Activated naive CD4-positive, alpha-beta T cell treated with anti-CD3 and anti-CD28 coated beads, Interleukin-2, amount 10 ng/mL, durations not matched to agents 7 days and 5 days (primary cell): ENCODE measurements at regions of chr12 and their contacts with region 1.

Region 1: GRCh38 chr12:47819896-47820630 is at the start of gene HDAC7:
- DNase-seq: peak; percentile 88
- H3K4me3 Mint-ChIP-seq: peak within 1 kb of the TSS; percentile 94
- H3K27ac Mint-ChIP-seq: peak within 1 kb of the TSS; percentile 95
- H3K4me1 Mint-ChIP-seq: peaks cover 73% of the 10 kb centered on the region
- H3K27me3 Mint-ChIP-seq: no peaks in the 10 kb centered on the region

Region 2: GRCh38 chr12:47779301-47779942 is 40.6 kb before region 1 on chr12:
- CTCF ChIA-PET with region 1: interaction called, 13 read pairs
- DNase-seq: peak; percentile 95
- H3K4me3 Mint-ChIP-seq: no peak overlapping the region
- H3K27ac Mint-ChIP-seq: peak overlapping the region; percentile 77
- H3K4me1 Mint-ChIP-seq: peaks cover 53% of the 10 kb centered on the region
- H3K27me3 Mint-ChIP-seq: no peaks in the 10 kb centered on the region

Region 3: DNA sequence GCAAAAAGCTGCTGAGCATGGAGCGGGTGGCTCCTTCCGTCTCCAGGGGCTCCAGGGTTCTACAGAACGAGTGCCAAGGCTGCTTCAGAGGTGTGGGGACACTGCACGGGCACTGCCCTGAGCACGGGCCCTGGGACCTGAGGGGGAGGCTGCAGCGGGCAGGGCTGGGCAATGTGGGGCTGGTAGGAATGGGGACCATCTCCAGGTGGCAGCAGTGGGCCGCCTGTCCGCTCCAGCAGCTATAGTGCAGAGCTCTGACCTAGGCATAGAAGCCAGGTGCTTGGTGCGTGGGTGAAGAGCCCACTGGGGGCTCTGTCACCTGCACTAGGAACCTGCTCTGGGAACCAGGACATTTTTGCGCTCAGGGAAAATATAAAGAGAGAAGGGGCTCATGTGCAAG is 22.6 kb before region 1 on chr12:
- CTCF ChIA-PET with region 1: interaction called, 47 read pairs
- DNase-seq: peak; percentile 50
- H3K4me3 Mint-ChIP-seq: no peak overlapping the region
- H3K27ac Mint-ChIP-seq: peak overlapping the region; percentile 90
- H3K4me1 Mint-ChIP-seq: peaks cover 46% of the 10 kb centered on the region
- H3K27me3 Mint-ChIP-seq: no peaks in the 10 kb centered on the region